Activated CD4-positive, alpha-beta memory T cell treated with anti-CD3 and anti-CD28 coated beads for 36 hours (primary cell): ENCODE measurements at regions of chr6 and their contacts with region 1.

Region 1: GRCh38 chr6:110873981-110874879 is at the start of gene AMD1:
- DNase-seq: peak; percentile 96
- H3K4me3 Mint-ChIP-seq: peak within 1 kb of the TSS; percentile 96
- H3K27ac Mint-ChIP-seq: peak within 1 kb of the TSS; percentile 97
- H3K4me1 Mint-ChIP-seq: peaks cover 27% of the 10 kb centered on the region
- H3K27me3 Mint-ChIP-seq: no peaks in the 10 kb centered on the region
- total RNA-seq, gene AMD1: 79.1 to 84.3 TPM

Region 2: GRCh38 chr6:110179401-110180227 is 694.6 kb before region 1 on chr6 and contains the start of gene WASF1:
- CTCF ChIA-PET with region 1: no interaction called
- POLR2A ChIA-PET with region 1: no interaction called
- intact Hi-C with region 1: loop called (anchors 2 kb)
- DNase-seq: peak; percentile 94
- H3K4me3 Mint-ChIP-seq: peak within 1 kb of the TSS; percentile 85
- H3K27ac Mint-ChIP-seq: no peak within 1 kb of the TSS
- H3K4me1 Mint-ChIP-seq: peaks cover 5% of the 10 kb centered on the region
- H3K27me3 Mint-ChIP-seq: peaks cover 10% of the 10 kb centered on the region
- total RNA-seq, gene WASF1: 1.9 to 2.6 TPM

Region 3: GRCh38 chr6:110589865-110590513 is 284.2 kb before region 1 on chr6:
- CTCF ChIA-PET with region 1: no interaction called
- POLR2A ChIA-PET with region 1: interaction called, 11 read pairs
- intact Hi-C with region 1: no loop called
- DNase-seq: peak; percentile 26
- H3K4me3 Mint-ChIP-seq: no peak overlapping the region
- H3K27ac Mint-ChIP-seq: no peak overlapping the region
- H3K4me1 Mint-ChIP-seq: peaks cover 18% of the 10 kb centered on the region
- H3K27me3 Mint-ChIP-seq: no peaks in the 10 kb centered on the region

Region 4: GRCh38 chr6:110708295-110708950 is 165.8 kb before region 1 on chr6:
- CTCF ChIA-PET with region 1: no interaction called
- POLR2A ChIA-PET with region 1: no interaction called
- intact Hi-C with region 1: no loop called
- DNase-seq: no peak
- H3K4me3 Mint-ChIP-seq: no peak overlapping the region
- H3K27ac Mint-ChIP-seq: no peak overlapping the region
- H3K4me1 Mint-ChIP-seq: no peaks in the 10 kb centered on the region
- H3K27me3 Mint-ChIP-seq: no peaks in the 10 kb centered on the region

Region 5: DNA sequence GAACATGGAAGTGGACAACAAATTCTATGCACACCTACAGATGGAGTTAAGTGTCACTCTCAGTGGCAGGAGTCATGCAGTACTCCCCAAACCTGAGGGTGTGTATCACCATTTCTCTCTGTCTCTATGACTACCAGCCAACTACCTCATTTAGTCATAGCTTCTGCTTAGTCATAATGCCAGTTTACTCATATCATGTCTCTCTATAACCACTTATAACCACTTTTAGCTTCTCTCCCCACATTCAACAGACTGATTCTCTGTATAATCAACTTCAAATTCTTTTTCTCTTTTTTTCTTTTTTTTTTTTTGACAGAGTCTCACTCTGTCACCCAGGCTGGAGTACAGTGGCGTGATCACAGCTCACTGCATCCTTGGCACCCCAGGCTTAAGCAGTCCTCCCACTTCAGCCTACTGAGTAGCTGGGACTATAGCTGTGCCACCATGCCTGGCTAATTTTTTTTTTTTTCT is 70.5 kb after region 1 on chr6:
- CTCF ChIA-PET with region 1: interaction called, 24 read pairs
- POLR2A ChIA-PET with region 1: interaction called, 13 read pairs
- intact Hi-C with region 1: loop called (anchors 1 kb)
- DNase-seq: peak; percentile 71
- H3K4me3 Mint-ChIP-seq: peak overlapping the region; percentile 16
- H3K27ac Mint-ChIP-seq: peak overlapping the region; percentile 71
- H3K4me1 Mint-ChIP-seq: peaks cover 10% of the 10 kb centered on the region
- H3K27me3 Mint-ChIP-seq: no peaks in the 10 kb centered on the region

Region 6: DNA sequence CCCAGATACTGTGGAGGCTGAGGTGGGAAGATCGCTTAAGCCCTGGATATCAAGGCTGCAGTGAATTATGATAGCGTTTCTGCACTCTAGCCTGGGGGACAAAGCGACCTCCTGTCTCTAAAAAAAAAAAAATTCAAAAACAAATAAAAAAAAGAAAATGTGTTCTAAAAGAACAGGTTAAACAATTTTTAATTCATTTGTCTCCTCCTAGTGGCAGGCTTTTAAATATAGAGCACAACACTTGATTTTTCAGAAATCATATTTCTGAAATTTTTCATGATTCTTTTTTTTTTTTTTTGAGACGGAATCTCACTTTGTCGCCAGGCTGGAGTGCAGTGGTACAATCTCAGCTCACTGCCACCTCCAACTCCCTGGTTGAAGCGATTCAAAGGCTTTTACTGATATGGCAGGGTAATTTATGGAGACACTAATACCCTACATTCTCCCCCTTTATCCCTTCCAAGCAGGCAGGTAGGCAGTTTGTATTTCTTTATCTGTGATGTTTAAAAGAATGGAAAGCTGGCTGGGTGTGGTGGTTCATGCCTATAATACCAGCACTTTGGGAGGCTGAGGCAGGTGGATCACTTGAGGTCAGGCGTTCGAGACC is 75.6 kb after region 1 on chr6:
- CTCF ChIA-PET with region 1: interaction called, 24 read pairs
- POLR2A ChIA-PET with region 1: interaction called, 13 read pairs
- intact Hi-C with region 1: loop called (anchors 1 kb)
- DNase-seq: no peak
- H3K4me3 Mint-ChIP-seq: no peak overlapping the region
- H3K27ac Mint-ChIP-seq: no peak overlapping the region
- H3K4me1 Mint-ChIP-seq: peaks cover 1% of the 10 kb centered on the region
- H3K27me3 Mint-ChIP-seq: no peaks in the 10 kb centered on the region

Region 7: GRCh38 chr6:110958329-110959192 is 84.3 kb after region 1 on chr6 and contains the start of gene GTF3C6:
- CTCF ChIA-PET with region 1: interaction called, 4 read pairs
- POLR2A ChIA-PET with region 1: interaction called, 47 read pairs
- intact Hi-C with region 1: loop called (anchors 1 kb)
- DNase-seq: peak; percentile 95
- H3K4me3 Mint-ChIP-seq: peak within 1 kb of the TSS; percentile 97
- H3K27ac Mint-ChIP-seq: peak within 1 kb of the TSS; percentile 98
- H3K4me1 Mint-ChIP-seq: peaks cover 15% of the 10 kb centered on the region
- H3K27me3 Mint-ChIP-seq: peaks cover 1% of the 10 kb centered on the region
- total RNA-seq, gene GTF3C6: 97.1 to 97.7 TPM

Region 8: DNA sequence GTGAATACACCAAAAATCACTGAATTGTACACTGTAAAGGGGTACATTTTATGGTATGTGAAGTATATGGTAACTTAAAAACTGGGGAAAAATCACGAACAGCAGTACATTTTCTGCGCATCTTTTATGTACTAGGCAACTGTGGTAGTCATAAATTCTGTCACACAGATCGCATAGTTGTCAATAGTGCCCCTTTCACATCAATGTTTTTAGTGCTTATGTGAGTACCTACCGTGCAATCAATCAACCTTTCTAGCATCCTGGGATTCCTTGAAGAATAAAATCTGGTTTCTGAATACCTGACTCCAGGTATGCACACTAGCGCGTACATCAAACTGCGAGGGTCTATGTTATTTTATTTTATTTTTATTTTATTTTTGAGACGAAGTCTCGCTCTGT is 107.0 kb after region 1 on chr6:
- CTCF ChIA-PET with region 1: interaction called, 6 read pairs
- POLR2A ChIA-PET with region 1: interaction called, 22 read pairs
- intact Hi-C with region 1: loop called (anchors 1 kb)
- DNase-seq: no peak
- H3K4me3 Mint-ChIP-seq: peak overlapping the region; percentile 98
- H3K27ac Mint-ChIP-seq: peak overlapping the region; percentile 97
- H3K4me1 Mint-ChIP-seq: peaks cover 50% of the 10 kb centered on the region
- H3K27me3 Mint-ChIP-seq: no peaks in the 10 kb centered on the region

Region 9: DNA sequence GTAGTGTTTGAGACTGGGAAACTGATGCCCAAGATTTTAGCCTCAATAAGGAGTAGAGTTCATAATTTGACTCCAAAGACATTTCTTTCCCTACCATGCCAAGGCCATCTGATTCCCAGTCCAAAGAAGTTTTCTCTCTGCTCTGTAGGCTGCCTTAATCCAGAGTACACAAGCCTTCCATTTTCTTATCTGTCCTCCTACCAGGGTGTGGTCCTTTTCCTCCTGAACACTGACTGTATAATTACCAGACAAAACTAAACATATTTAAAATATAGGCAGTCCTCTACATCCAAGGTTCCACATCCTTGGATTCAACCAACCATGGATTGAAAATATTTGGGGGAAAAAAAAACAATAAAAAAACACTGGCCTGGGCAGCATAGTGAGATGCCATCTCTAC is 321.4 kb after region 1 on chr6:
- CTCF ChIA-PET with region 1: no interaction called
- POLR2A ChIA-PET with region 1: no interaction called
- intact Hi-C with region 1: no loop called
- DNase-seq: no peak
- H3K4me3 Mint-ChIP-seq: no peak overlapping the region
- H3K27ac Mint-ChIP-seq: no peak overlapping the region
- H3K4me1 Mint-ChIP-seq: peaks cover 2% of the 10 kb centered on the region
- H3K27me3 Mint-ChIP-seq: no peaks in the 10 kb centered on the region